ENCODE measurements at regions of chr1 and their contacts with region 1.

Region 1: DNA sequence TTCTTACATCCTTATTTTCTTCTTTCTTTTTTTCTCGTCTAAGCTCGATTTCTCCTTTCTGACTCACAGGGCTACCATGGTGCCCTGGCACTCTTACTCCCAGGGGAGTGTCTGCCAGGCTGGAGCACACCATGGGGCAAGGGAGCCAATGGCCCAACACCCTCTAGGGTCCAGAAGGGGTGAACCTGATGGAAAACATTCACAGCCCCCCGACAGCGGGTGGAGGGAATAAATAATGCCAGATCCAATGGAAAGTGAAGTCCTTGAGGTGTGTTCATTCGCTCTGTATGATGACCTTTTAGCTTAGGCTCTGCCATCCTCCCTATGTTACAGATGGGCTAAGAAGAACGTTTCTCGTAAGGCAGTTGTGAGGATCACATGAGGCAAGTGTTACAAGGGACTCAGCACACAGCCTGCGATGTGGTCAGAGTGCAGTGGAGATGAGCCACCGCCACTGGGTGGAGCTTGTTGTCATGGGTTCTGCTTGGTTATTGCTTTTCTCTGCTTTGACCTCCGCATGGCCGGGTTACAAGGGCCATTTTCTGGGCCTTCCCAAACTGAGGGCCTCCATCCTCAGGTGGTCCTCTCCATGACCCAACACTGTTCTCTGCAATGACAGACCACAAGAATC is 3.5 kb upstream of the FCMR start:
- DNase-seq: peak; percentile 91
- ATAC-seq: peak; percentile 72
- H3K4me3 ChIP-seq: no peak overlapping the region; the same call in 1 of the 2 replicates
- H3K27ac ChIP-seq: peak overlapping the region; percentile 99
- H3K4me1 ChIP-seq: peaks cover 51% of the 10 kb centered on the region
- H3K27me3 ChIP-seq: no peaks in the 10 kb centered on the region
- CTCF ChIP-seq: peak in 1 of 3 experiments; percentile 29; a peak in 1 of 6 replicates
- EP300 ChIP-seq: no peak; a peak in 1 of 4 replicates
- POLR2A ChIP-seq: no peak
- RAD21 ChIP-seq: peak; percentile 56

Region 2: GRCh38 chr1:206684478-206685333 is 240.5 kb before region 1 on chr1 and contains the start of gene MAPKAPK2:
- CTCF ChIA-PET with region 1: no interaction called
- POLR2A ChIA-PET with region 1: no interaction called
- RAD21 ChIA-PET with region 1: no interaction called
- SMC1A ChIA-PET with region 1: interaction called, 6 read pairs
- in situ Hi-C with region 1: no loop called
- intact Hi-C with region 1: loop called (anchors 5 kb)
- DNase-seq: no peak
- ATAC-seq: peak; percentile 55
- H3K4me3 ChIP-seq: peak within 1 kb of the TSS; percentile 91
- H3K27ac ChIP-seq: peak within 1 kb of the TSS; percentile 86
- H3K4me1 ChIP-seq: peaks cover 42% of the 10 kb centered on the region
- H3K27me3 ChIP-seq: no peaks in the 10 kb centered on the region
- CTCF ChIP-seq: no peak
- EP300 ChIP-seq: no peak
- POLR2A ChIP-seq: peak; percentile 64
- RAD21 ChIP-seq: no peak
- polyA plus RNA-seq, gene MAPKAPK2: 0.72 to 4.9 TPM

Region 3: GRCh38 chr1:206967096-206967849 is 42.1 kb after region 1 on chr1:
- CTCF ChIA-PET with region 1: interaction called, 124 read pairs
- POLR2A ChIA-PET with region 1: interaction called, 12 read pairs
- RAD21 ChIA-PET with region 1: interaction called, 4 read pairs
- SMC1A ChIA-PET with region 1: interaction called, 35 read pairs
- in situ Hi-C with region 1: no loop called
- intact Hi-C with region 1: loop called (anchors 2 kb)
- DNase-seq: peak; percentile 72
- ATAC-seq: peak; percentile 72
- H3K4me3 ChIP-seq: 0 out of 2 replicates have a peak overlapping the region, but pooled peaks have one; percentile 37
- H3K27ac ChIP-seq: peak overlapping the region; percentile 52
- H3K4me1 ChIP-seq: peaks cover 38% of the 10 kb centered on the region
- H3K27me3 ChIP-seq: no peaks in the 10 kb centered on the region
- CTCF ChIP-seq: no peak
- EP300 ChIP-seq: 0 out of 4 replicates have a peak, but pooled peaks of 1 of the 2 experiments have one; percentile 32
- POLR2A ChIP-seq: no peak
- RAD21 ChIP-seq: no peak

Region 4: GRCh38 chr1:207336559-207337467 is 411.6 kb after region 1 on chr1:
- CTCF ChIA-PET with region 1: no interaction called
- POLR2A ChIA-PET with region 1: no interaction called
- RAD21 ChIA-PET with region 1: no interaction called
- SMC1A ChIA-PET with region 1: no interaction called
- in situ Hi-C with region 1: loop called (anchors 10 kb)
- intact Hi-C with region 1: no loop called
- DNase-seq: peak; percentile 91
- ATAC-seq: peak; percentile 78
- H3K4me3 ChIP-seq: peak overlapping the region; percentile 1; the same call in 1 of the 2 replicates
- H3K27ac ChIP-seq: peak overlapping the region; percentile 81
- H3K4me1 ChIP-seq: peaks cover 47% of the 10 kb centered on the region
- H3K27me3 ChIP-seq: no peaks in the 10 kb centered on the region
- CTCF ChIP-seq: no peak
- EP300 ChIP-seq: peak; percentile 72 to 89; a peak in 3 of 4 replicates
- POLR2A ChIP-seq: no peak
- RAD21 ChIP-seq: no peak

Measured in GM12878 (cell line).